ENCODE measurements at regions of chr19 and their contacts with region 1.

Region 1: DNA sequence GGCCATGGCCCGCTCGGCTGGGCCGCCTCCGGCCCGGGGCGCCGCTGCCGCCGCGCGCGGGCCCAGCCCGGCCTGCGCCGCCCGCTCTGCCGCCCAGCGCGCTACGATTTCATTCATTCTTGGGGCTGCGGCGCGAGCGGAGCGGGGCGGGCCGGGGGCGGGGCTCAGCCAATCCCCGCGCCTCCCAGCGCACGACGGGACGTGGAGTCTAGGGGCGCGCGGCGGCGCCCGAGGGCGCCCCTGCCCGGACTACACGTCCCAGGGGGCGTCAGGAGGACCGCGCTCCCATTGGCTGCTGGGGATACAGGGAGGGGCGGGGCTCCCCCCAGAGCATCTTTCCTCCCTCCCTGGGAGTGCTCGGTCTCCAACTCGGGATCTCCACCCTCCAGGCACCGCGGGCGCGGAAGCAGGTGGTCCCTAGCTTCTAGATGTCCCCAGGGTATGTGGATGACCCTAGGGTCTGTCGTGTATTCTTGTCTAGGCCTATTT is 5.6 kb upstream of the DPF1 start:
- DNase-seq: peak; percentile 89 to 93
- ATAC-seq: peak; percentile 49 to 79
- H3K4me3 ChIP-seq: peak overlapping the region; percentile 52
- H3K27ac ChIP-seq: peak overlapping the region in 1 of 2 experiments; percentile 67; a peak in 3 of 6 replicates
- H3K4me1 ChIP-seq: peaks cover 25% of the 10 kb centered on the region
- CTCF ChIP-seq: no peak
- EP300 ChIP-seq: no peak
- POLR2A ChIP-seq: no peak
- RAD21 ChIP-seq: no peak

Region 2: DNA sequence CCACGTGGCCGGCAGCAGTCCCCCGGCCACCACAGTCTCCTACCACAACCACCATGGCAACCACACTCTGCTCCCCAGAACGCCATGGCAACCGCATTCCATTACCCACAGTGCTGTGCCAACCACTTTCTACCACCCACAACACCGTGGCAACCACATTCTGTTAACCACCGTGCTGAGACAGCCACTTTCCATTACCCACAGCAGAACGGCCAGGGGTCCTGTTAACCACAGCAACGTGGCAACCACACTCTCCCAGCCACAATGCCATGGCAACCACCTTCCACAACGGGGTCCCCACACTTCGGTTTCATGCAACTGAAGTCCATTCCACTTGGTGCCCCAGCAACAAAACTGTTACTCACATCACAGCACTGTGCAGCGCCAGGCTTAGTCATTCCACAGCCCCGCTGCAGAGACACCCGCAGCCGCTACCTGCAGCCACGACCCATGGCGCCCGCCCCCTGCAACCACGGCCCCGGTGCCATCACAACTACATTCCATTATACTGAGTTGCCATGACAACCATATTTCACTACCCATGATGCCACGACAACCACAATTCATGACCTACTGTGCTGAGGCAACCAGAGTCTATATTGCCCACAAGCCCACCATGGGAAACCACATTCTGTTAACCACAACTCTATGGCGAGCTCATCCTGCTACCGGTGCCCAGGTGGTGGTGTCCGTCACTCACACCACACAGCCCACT is 15.6 kb before region 1 on chr19:
- CTCF ChIA-PET with region 1: interaction called, 20 read pairs
- POLR2A ChIA-PET with region 1: interaction called, 3 read pairs
- DNase-seq: peak in 1 of 2 experiments; percentile 81
- ATAC-seq: peak; percentile 37 to 46
- H3K4me3 ChIP-seq: no peak overlapping the region
- H3K27ac ChIP-seq: no peak overlapping the region
- H3K4me1 ChIP-seq: peaks cover 24% of the 10 kb centered on the region; the same call in 2 of the 3 replicates
- CTCF ChIP-seq: no peak
- EP300 ChIP-seq: no peak
- POLR2A ChIP-seq: no peak
- RAD21 ChIP-seq: no peak

Region 3: GRCh38 chr19:38270587-38271167 is 41.0 kb after region 1 on chr19:
- CTCF ChIA-PET with region 1: interaction called, 23 read pairs
- POLR2A ChIA-PET with region 1: no interaction called
- DNase-seq: peak; percentile 97 to 99
- ATAC-seq: peak; percentile 69 to 82
- H3K4me3 ChIP-seq: peak overlapping the region; percentile 1; the same call in 1 of the 3 replicates
- H3K27ac ChIP-seq: peak overlapping the region; percentile 89 to 91
- H3K4me1 ChIP-seq: peaks cover 94% of the 10 kb centered on the region
- CTCF ChIP-seq: no peak
- EP300 ChIP-seq: peak; percentile 35 to 81; a peak in 3 of 5 replicates
- POLR2A ChIP-seq: no peak
- RAD21 ChIP-seq: peak; percentile 32 to 45; a peak in 2 of 5 replicates

Region 4: GRCh38 chr19:38304866-38305429 is 75.3 kb after region 1 on chr19:
- CTCF ChIA-PET with region 1: interaction called, 16 read pairs
- POLR2A ChIA-PET with region 1: interaction called, 3 read pairs
- DNase-seq: peak; percentile 100
- ATAC-seq: peak; percentile 60 to 85
- H3K4me3 ChIP-seq: peak overlapping the region; percentile 60
- H3K27ac ChIP-seq: peak overlapping the region; percentile 92 to 95
- H3K4me1 ChIP-seq: peaks cover 50% of the 10 kb centered on the region
- CTCF ChIP-seq: no peak
- EP300 ChIP-seq: no peak; a peak in 1 of 5 replicates
- POLR2A ChIP-seq: peak; percentile 82
- RAD21 ChIP-seq: peak; percentile 1 to 43; a peak in 2 of 5 replicates

Region 5: GRCh38 chr19:38346837-38347236 is 117.2 kb after region 1 on chr19:
- CTCF ChIA-PET with region 1: interaction called, 15 read pairs
- POLR2A ChIA-PET with region 1: no interaction called
- DNase-seq: no peak
- ATAC-seq: no peak
- H3K4me3 ChIP-seq: no peak overlapping the region
- H3K27ac ChIP-seq: no peak overlapping the region
- H3K4me1 ChIP-seq: no peaks in the 10 kb centered on the region
- CTCF ChIP-seq: no peak
- EP300 ChIP-seq: no peak
- POLR2A ChIP-seq: no peak
- RAD21 ChIP-seq: no peak

Region 6: GRCh38 chr19:38387550-38388348 is 158.1 kb after region 1 on chr19 and contains the start of gene GGN:
- CTCF ChIA-PET with region 1: interaction called, 61 read pairs
- POLR2A ChIA-PET with region 1: no interaction called
- DNase-seq: peak; percentile 98 to 100
- ATAC-seq: peak; percentile 53 to 78
- H3K4me3 ChIP-seq: peak within 1 kb of the TSS; percentile 61
- H3K27ac ChIP-seq: peak within 1 kb of the TSS; percentile 71 to 90
- H3K4me1 ChIP-seq: peaks cover 35% of the 10 kb centered on the region
- CTCF ChIP-seq: no peak
- EP300 ChIP-seq: no peak
- POLR2A ChIP-seq: no peak; the same call in 1 of the 2 replicates
- RAD21 ChIP-seq: no peak
- polyA plus RNA-seq, gene GGN: not detected in 2 replicates

Measured in A549 (cell line).